ENCODE measurements at regions of chr2 and their contacts with region 1.

Region 1: DNA sequence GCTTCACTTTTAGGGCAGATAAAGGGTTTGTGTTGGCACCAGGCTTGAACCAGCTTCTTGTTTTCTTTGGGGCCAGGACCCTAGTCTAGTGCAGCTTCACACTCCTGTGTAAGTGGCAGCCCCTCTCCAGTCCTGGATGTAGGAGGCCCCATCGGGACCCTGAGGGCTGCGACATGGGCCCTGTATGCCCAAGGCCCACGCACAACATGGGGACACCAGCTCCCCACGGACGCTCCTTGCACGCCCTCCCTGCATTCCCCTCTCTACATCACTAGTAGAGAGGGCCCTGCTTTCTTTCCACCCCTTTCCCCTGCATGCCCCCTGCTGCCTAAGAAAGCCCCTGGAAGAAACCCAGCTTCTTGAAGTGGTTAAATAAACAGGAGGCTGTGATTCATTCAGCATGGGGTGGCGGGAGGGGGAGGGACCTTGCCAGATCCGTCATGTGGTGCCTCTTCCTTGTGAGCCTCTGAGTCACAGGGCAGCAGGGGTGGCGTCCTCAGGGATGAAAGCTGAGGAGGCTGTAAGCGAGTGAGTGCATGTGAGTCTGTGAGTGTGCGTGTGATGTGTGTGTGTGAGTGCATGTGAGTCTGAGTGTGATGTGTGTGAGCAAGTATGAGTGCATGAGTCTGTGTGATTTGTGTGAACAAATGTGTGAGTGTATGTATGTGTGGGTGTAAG is 42.5 kb downstream of the COPS8 start:
- DNase-seq: peak; percentile 99
- H3K4me3 ChIP-seq: peak overlapping the region in 2 of 4 donors; percentile 2 to 14
- H3K27ac ChIP-seq: peak overlapping the region; percentile 58 to 93 (median 87)
- H3K4me1 ChIP-seq: peaks cover 0 to 71% (median 54%) of the 10 kb centered on the region in 4 donors
- H3K27me3 ChIP-seq: no peaks in the 10 kb centered on the region
- CTCF ChIP-seq: no peak
- EP300 ChIP-seq: peak in 3 of 4 donors; percentile 88 to 99 (median 89)
- POLR2A ChIP-seq: no peak

Region 2: GRCh38 chr2:237161189-237161588 is 33.0 kb after region 1 on chr2:
- intact Hi-C with region 1: loop called (anchors 2 kb)
- DNase-seq: peak; percentile 91
- H3K4me3 ChIP-seq: no peak overlapping the region
- H3K27ac ChIP-seq: peak overlapping the region; percentile 41 to 63 (median 58)
- H3K4me1 ChIP-seq: peaks cover 0 to 39% (median 21%) of the 10 kb centered on the region in 4 donors
- H3K27me3 ChIP-seq: no peaks in the 10 kb centered on the region
- CTCF ChIP-seq: no peak
- EP300 ChIP-seq: no peak
- POLR2A ChIP-seq: no peak

Region 3: DNA sequence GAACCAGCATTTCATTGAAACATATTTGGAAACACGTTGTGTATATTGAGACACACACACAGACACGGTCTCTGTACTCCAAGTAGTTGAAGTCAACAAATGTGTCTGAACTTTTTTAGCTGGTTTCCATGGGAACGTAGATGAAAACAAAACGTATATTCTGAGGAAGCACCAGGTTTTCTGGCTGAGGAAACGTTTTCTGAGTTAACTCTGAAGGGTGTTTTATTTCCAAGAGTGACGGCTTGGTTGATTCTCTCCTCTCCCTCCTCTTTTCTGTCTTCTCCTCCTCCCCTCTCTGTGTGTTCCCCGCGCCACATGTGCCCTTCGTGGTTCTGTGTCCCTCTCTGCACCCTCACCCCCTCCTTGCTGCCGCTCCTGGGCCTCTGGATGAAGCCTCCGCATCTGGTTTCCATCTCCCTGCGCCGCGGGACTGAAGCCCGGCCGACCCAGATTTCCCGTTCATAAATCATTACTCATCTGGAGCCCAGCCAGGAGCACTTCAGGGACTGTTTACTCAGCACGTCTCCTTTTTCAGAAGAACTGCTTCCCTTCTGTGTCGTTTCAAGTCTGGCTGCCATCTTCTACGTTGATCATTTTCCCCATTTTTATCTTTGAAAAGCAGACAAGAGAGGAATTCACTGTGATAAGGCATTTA is 163.1 kb after region 1 on chr2:
- intact Hi-C with region 1: loop called (anchors 5 kb)
- DNase-seq: peak; percentile 99
- H3K4me3 ChIP-seq: no peak overlapping the region
- H3K27ac ChIP-seq: peak overlapping the region; percentile 78 to 90 (median 86)
- H3K4me1 ChIP-seq: peaks cover 0 to 72% (median 52%) of the 10 kb centered on the region in 4 donors
- H3K27me3 ChIP-seq: no peaks in the 10 kb centered on the region
- CTCF ChIP-seq: no peak
- EP300 ChIP-seq: peak; percentile 84 to 95 (median 94)
- POLR2A ChIP-seq: no peak

Region 4: DNA sequence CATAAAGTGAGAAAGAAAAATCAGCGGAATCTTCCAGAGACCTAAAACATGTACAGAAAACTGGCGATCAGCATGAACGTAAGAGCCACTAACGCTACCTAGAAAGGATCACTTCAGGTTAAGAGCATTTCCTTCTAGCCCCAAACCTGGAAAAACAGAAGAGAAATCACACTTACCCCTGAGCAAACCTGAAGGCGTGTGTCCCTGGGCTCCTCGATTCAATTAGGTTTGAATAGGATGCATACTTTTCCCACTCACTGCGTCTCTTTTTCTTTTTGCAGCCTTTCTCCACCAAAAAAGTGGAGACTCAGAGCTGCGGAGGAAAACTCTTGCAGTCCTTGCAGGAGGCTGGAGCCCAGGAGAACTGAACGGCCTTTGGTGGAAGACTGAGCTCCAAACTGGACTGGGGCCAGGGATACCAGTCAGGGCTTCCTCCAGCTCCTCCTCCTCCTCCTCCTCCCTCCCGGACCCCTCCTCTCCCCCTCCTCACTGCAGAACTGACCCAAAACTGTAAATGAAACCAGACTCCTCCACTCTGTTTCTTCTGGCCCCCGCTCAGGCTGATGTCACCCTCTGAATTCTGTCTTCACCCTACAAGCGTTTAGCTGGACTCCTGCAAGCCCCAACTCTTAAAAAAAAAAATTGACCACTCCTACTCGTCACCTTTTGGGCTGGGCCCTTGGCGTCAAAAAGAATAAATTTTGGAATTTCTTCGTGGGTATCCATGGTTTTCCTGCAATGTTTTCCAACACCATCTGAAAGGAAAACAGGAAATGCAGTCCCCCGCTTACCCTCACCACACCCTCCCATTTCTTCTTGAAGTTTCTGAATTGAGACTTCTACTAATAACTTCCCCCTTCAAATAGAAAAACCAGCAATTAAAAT is 285.9 kb after region 1 on chr2 and contains the start of gene COL6A3:
- intact Hi-C with region 1: loop called (anchors 2 kb)
- DNase-seq: peak; percentile 94
- H3K4me3 ChIP-seq: peak within 1 kb of the TSS; percentile 53 to 81 (median 74)
- H3K27ac ChIP-seq: peak within 1 kb of the TSS; percentile 84 to 96 (median 94)
- H3K4me1 ChIP-seq: peaks cover 0 to 19% (median 6%) of the 10 kb centered on the region in 4 donors
- H3K27me3 ChIP-seq: no peaks in the 10 kb centered on the region
- CTCF ChIP-seq: no peak
- EP300 ChIP-seq: no peak
- POLR2A ChIP-seq: peak; percentile 53 to 56
- total RNA-seq, gene COL6A3: 233 to 715 (median 381) TPM

Measured in sigmoid colon (tissue), 7 donors.